Common myeloid progenitor, CD34-positive (primary cell): ENCODE measurements at regions of chr20 and their contacts with region 1.

Region 1: DNA sequence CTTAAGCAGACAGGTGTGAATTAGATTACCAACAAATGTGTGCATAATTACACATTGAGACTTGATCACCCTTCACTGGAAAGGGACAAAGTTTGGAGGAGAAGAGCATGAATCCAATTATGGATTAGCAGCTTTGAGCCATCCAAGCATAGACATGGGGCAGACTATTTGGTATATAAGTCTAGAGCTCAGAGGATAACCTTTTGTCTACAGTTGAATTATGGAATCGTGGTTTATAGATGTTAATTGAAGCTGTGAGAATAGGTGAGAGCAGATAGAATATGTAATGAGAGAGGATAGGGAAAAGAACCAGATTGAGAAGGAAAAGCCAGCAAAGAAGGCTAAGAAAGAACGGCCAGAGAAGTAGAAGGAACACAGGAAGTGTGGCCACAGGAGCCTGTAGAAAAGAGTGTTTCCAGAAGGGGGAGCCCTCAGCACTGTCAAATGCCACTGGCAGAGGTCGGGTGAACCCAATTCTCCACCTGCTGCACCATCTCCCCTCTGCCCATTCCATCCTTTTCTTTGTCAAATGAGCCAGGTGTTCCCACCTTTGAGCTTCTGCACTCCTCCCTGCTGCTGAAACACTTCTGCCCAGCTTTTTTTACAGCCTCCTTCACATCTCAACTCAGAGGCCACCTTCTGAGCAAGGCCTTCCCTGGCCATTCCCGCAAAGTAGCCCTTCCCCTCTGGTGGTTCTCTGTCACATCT is 7.3 kb downstream of the DNTTIP1 start:
- DNase-seq: peak; percentile 63 to 77 (median 72)
- H3K4me3 ChIP-seq: no peak overlapping the region
- H3K27ac ChIP-seq: no peak overlapping the region
- H3K4me1 ChIP-seq: peaks cover 0 to 7% (median 0%) of the 10 kb centered on the region in 4 experiments
- H3K27me3 ChIP-seq: no peaks in the 10 kb centered on the region

Region 2: DNA sequence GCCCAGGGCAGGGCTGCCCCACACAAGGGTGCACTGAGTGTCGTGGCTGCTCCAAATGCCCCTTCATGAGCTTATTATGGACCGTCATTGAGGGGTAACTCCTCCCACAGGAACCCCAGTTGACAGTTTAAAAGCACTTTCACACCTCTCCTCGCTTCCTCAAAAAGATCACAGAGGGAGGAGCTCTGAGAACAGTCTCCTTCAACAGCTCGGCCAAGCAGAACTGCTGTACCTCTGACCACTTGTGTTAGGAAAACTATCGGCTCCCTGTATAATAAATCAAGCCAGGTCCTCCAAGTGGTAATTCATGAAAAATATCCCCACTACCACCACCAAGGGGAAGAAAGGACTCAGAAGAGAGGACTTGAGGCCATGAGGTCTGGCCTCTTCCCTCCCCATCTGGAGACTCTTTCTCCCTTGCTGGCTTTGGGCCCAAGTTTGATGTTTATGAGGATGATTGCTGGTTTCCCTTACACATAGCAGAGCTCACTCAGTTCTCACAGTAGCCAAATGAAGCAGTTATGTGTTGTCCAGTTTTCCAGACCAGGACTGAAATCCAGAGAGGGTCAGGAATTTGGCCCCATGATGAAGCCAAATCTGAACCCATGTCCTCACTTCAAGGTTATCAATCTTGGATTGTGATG is 43.2 kb after region 1 on chr20:
- CTCF ChIA-PET with region 1: interaction called, 18 read pairs
- POLR2A ChIA-PET with region 1: interaction called, 3 read pairs
- DNase-seq: peak; percentile 32 to 86 (median 81)
- H3K4me3 ChIP-seq: no peak overlapping the region
- H3K27ac ChIP-seq: peak overlapping the region; percentile 37 to 54
- H3K4me1 ChIP-seq: peaks cover 3 to 15% (median 10%) of the 10 kb centered on the region in 4 experiments
- H3K27me3 ChIP-seq: no peaks in the 10 kb centered on the region

Region 3: GRCh38 chr20:45899041-45899835 is 100.1 kb after region 1 on chr20:
- CTCF ChIA-PET with region 1: interaction called, 11 read pairs
- POLR2A ChIA-PET with region 1: no interaction called
- DNase-seq: no peak
- H3K4me3 ChIP-seq: no peak overlapping the region
- H3K27ac ChIP-seq: no peak overlapping the region
- H3K4me1 ChIP-seq: no peaks in the 10 kb centered on the region
- H3K27me3 ChIP-seq: no peaks in the 10 kb centered on the region

Region 4: DNA sequence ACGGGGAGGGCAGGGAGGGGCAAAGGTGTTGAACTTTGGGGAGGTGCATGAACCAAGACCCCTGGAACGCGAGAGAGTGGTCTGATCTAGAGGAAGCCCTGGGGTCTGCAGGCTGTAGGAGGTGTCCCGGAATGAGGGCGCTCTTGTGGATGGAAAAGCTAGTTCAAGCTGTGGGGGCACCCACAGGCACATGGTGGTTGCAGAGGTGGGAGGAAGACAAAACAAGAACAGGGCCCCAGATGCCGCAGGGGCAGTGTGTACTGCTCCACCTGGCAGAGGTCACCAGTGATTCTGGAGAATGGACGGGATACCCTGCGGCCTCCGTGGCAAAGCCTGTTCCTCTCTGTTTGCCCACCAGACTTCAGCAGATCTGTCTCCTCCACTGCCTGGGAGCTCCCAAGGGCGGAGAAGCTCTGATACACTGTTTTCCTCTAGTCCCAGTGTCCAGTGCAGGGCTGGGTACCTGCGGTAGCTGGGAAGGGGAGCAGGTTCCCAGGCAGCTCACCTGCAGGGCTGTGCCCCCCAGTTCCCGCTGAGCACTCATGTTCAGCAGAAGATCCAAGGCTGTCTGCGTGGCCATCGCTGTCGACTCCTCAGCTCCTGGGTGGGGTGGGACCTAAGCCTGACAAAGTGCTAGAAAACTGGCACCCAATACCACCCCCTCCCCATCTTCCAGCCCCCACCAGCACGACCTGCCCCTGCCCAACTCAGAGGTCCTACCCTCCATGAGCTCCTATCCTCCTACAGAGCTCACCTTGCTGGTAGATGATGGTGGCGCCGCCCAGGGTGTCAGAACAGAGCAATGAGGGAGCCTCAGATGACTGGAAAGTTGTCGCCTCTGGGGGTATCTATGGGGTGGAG is 158.2 kb after region 1 on chr20:
- CTCF ChIA-PET with region 1: interaction called, 41 read pairs
- POLR2A ChIA-PET with region 1: no interaction called
- DNase-seq: no peak
- H3K4me3 ChIP-seq: no peak overlapping the region
- H3K27ac ChIP-seq: no peak overlapping the region
- H3K4me1 ChIP-seq: no peaks in the 10 kb centered on the region
- H3K27me3 ChIP-seq: no peaks in the 10 kb centered on the region

Region 5: GRCh38 chr20:45963059-45964005 is 164.2 kb after region 1 on chr20:
- CTCF ChIA-PET with region 1: interaction called, 41 read pairs
- POLR2A ChIA-PET with region 1: no interaction called
- DNase-seq: peak; percentile 44 to 75 (median 69)
- H3K4me3 ChIP-seq: no peak overlapping the region
- H3K27ac ChIP-seq: no peak overlapping the region
- H3K4me1 ChIP-seq: peaks cover 0 to 1% (median under 1%) of the 10 kb centered on the region in 4 experiments
- H3K27me3 ChIP-seq: no peaks in the 10 kb centered on the region